ENCODE measurements at regions of chr1 and their contacts with region 1.

Region 1: DNA sequence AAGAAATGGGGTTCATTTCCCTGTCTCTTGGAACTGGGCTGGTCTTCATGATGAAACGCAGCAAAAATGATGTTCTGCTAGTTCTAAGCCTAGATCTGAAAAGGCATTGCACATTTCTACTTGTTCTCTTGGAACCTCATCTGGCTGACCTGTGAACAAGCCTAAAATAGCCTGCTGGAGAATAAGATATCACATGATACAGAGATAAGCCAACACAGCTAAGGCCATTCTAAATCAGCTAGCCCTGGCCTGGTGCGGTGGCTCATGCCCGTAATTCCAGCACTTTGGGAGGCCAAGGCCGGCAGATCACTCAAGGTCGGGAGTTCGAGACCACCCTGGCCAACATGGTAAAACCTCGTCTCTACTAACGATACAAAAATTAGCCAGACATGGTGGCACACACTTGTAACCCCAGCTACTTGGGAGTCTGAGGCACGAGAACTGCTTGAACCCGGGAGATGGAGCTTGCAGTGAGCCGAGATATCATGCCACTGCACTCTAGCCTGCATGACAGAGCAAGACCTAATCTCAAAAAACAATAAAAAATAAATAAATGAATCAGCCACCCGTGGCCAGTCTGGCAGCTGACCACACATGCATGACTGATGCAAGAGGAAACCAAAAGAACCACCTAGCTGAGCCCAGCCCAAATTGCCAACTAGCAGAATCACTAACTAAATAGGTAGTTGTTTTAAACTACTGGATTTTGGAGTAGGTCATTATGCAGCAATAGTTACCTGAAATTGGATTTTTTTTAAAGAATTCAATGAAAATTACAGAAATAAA is 18.0 kb downstream of the CD244 start:
- DNase-seq: peak in 1 of 2 donors; percentile 49
- ATAC-seq: peak; percentile 59 to 81 (median 80)
- H3K4me3 ChIP-seq: no peak overlapping the region
- H3K4me3 Mint-ChIP-seq: peak overlapping the region; percentile 71
- H3K27ac ChIP-seq: peak overlapping the region; percentile 30
- H3K27ac Mint-ChIP-seq: no peak overlapping the region
- H3K4me1 ChIP-seq: peaks cover 75% of the 10 kb centered on the region
- H3K4me1 Mint-ChIP-seq: peaks cover 87% of the 10 kb centered on the region in 2 donors
- H3K27me3 ChIP-seq: no peaks in the 10 kb centered on the region
- H3K27me3 Mint-ChIP-seq: no peaks in the 10 kb centered on the region
- CTCF ChIP-seq: no peak

Region 2: DNA sequence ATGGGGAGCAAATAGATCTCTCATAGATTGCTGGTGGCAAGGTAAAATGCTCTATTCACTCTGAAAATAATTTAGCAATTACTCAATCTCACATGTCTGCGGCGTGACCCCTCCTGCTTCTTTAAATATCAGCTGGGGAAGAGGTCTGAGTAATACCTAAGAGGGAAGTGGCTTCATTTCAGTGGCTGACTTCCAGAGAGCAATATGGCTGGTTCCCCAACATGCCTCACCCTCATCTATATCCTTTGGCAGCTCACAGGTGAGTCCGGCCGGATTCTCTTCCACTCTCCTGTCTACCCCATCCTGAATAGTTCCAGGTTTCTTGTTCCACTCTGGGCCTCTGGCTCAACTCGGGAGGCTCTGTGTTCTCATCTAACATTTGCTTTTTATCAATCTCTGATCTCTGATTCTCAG is 105.5 kb before region 1 on chr1 and contains the start of gene SLAMF7:
- intact Hi-C with region 1: loop called (anchors 2 kb)
- DNase-seq: peak; percentile 63 to 75
- ATAC-seq: peak; percentile 71 to 84 (median 76)
- H3K4me3 ChIP-seq: peak within 1 kb of the TSS; percentile 43
- H3K4me3 Mint-ChIP-seq: peak within 1 kb of the TSS; percentile 88
- H3K27ac ChIP-seq: peak within 1 kb of the TSS; percentile 87
- H3K27ac Mint-ChIP-seq: peak within 1 kb of the TSS; percentile 88 to 96
- H3K4me1 ChIP-seq: peaks cover 43% of the 10 kb centered on the region
- H3K4me1 Mint-ChIP-seq: peaks cover 74 to 91% of the 10 kb centered on the region in 2 donors
- H3K27me3 ChIP-seq: no peaks in the 10 kb centered on the region
- H3K27me3 Mint-ChIP-seq: no peaks in the 10 kb centered on the region
- CTCF ChIP-seq: no peak
- total RNA-seq, gene SLAMF7: 191 to 301 (median 227) TPM

Region 3: DNA sequence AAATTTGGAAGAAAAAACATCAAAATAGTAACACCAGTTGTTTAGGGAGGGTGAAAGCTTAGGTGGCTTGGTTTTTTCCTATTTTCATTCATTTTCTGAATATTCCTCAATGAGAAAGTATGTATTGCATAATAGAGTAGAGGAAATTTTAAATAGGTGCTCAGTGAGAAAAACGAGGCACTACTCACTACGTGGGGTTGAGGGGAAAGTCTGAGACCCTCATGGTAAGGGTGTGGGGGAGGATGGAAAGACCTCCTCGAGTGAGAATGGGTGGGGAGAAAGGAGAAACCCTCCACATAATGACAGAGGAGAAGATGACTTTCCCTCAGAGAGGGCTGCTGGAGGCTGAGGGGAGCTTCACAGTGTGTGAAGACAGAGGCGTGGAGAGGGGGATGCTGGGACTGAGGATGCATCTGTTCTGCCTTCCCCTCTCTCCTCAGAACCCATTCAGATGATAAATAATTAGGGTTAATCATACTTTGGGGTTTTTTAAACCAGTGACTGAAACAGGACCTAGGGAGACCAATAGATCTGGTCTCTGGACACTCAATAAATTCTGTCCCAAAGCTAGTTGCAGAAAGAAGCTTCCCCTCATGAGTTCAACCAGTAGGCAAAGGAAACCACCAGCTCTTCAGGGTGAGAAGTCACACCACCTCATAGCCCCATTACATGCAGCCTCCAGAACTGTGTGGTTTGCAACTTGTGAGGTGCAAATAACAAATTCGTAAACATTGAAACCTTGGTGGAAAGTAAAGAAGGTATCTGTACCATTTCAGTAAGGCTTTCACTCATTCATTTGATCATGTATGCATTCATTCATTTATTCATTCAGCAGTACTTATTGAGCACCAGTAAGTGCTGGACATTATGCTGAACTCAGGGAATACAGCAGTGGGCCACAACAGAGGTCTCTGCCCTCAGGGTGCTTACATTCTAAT is 88.5 kb before region 1 on chr1:
- intact Hi-C with region 1: no loop called
- DNase-seq: peak; percentile 50 to 81
- ATAC-seq: peak; percentile 72 to 87 (median 85)
- H3K4me3 ChIP-seq: no peak overlapping the region
- H3K4me3 Mint-ChIP-seq: peak overlapping the region; percentile 65
- H3K27ac ChIP-seq: peak overlapping the region; percentile 93
- H3K27ac Mint-ChIP-seq: peak overlapping the region; percentile 95 to 96
- H3K4me1 ChIP-seq: peaks cover 57% of the 10 kb centered on the region
- H3K4me1 Mint-ChIP-seq: peaks cover 73% of the 10 kb centered on the region in 2 donors
- H3K27me3 ChIP-seq: no peaks in the 10 kb centered on the region
- H3K27me3 Mint-ChIP-seq: no peaks in the 10 kb centered on the region
- CTCF ChIP-seq: no peak

Measured in natural killer cell (primary cell).